Activated CD8-positive, alpha-beta T cell treated with anti-CD3 and anti-CD28 coated beads for 36 hours (primary cell): ENCODE measurements at regions of chr15 and their contacts with region 1.

Region 1: GRCh38 chr15:69729161-69729748 is 276.6 kb downstream of the RPLP1 start:
- DNase-seq: peak; percentile 85
- ATAC-seq: no peak
- H3K4me3 Mint-ChIP-seq: no peak overlapping the region
- H3K27ac Mint-ChIP-seq: no peak overlapping the region
- H3K4me1 Mint-ChIP-seq: peaks cover 21% of the 10 kb centered on the region
- H3K27me3 Mint-ChIP-seq: peaks cover 6% of the 10 kb centered on the region
- CTCF ChIP-seq: peak; percentile 75

Region 2: GRCh38 chr15:69576035-69576526 is 153.2 kb before region 1 on chr15:
- CTCF ChIA-PET with region 1: no interaction called
- POLR2A ChIA-PET with region 1: no interaction called
- intact Hi-C with region 1: loop called (anchors 10 kb)
- DNase-seq: peak; percentile 78
- ATAC-seq: peak; percentile 43
- H3K4me3 Mint-ChIP-seq: no peak overlapping the region
- H3K27ac Mint-ChIP-seq: no peak overlapping the region
- H3K4me1 Mint-ChIP-seq: peaks cover 32% of the 10 kb centered on the region
- H3K27me3 Mint-ChIP-seq: no peaks in the 10 kb centered on the region
- CTCF ChIP-seq: peak; percentile 69

Region 3: GRCh38 chr15:69593981-69594966 is 135.0 kb before region 1 on chr15:
- CTCF ChIA-PET with region 1: no interaction called
- POLR2A ChIA-PET with region 1: no interaction called
- intact Hi-C with region 1: no loop called
- DNase-seq: no peak
- ATAC-seq: no peak
- H3K4me3 Mint-ChIP-seq: no peak overlapping the region
- H3K27ac Mint-ChIP-seq: no peak overlapping the region
- H3K4me1 Mint-ChIP-seq: peaks cover 4% of the 10 kb centered on the region
- H3K27me3 Mint-ChIP-seq: peaks cover 9% of the 10 kb centered on the region
- CTCF ChIP-seq: no peak

Region 4: GRCh38 chr15:70111203-70112073 is 382.2 kb after region 1 on chr15:
- CTCF ChIA-PET with region 1: no interaction called
- POLR2A ChIA-PET with region 1: no interaction called
- intact Hi-C with region 1: no loop called
- DNase-seq: no peak
- ATAC-seq: no peak
- H3K4me3 Mint-ChIP-seq: no peak overlapping the region
- H3K27ac Mint-ChIP-seq: no peak overlapping the region
- H3K4me1 Mint-ChIP-seq: no peaks in the 10 kb centered on the region
- H3K27me3 Mint-ChIP-seq: no peaks in the 10 kb centered on the region
- CTCF ChIP-seq: no peak